Left ventricle myocardium inferior (tissue), 1 donor: ENCODE measurements at regions of chr7 and their contacts with region 1.

Region 1: DNA sequence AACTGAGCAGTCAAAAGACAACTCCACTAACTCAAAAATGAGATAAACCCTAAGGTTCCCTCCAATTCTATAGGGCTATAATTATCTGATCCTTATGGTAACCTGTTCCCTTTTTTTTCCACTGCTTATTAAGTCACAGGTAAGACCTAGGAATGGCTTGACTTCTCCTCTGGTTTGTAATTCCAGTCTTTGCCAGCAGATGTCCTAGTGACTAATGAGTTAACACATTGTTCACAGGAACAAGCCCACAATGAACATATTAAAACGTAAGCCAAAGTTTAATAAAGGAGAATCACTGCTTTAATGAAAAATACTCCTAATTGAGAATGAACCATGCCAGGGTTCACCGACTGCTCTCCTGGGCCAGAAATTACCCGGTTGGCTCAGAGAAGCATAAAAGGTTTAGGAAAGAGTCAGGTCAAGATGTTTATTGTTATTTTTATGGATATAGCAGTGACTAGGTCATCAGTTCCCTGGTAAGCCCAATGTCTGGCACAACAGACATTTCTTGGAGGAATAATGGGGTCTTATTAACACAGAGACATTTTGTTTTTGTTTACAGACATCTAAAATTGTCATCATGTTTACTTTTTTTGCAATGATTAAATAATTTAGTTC is 120.1 kb downstream of the ELAPOR2 start:
- DNase-seq: no peak
- H3K4me3 ChIP-seq: no peak overlapping the region
- H3K27ac ChIP-seq: no peak overlapping the region
- H3K4me1 ChIP-seq: peaks cover 3% of the 10 kb centered on the region
- H3K27me3 ChIP-seq: no peaks in the 10 kb centered on the region
- CTCF ChIP-seq: peak; percentile 84

Region 2: DNA sequence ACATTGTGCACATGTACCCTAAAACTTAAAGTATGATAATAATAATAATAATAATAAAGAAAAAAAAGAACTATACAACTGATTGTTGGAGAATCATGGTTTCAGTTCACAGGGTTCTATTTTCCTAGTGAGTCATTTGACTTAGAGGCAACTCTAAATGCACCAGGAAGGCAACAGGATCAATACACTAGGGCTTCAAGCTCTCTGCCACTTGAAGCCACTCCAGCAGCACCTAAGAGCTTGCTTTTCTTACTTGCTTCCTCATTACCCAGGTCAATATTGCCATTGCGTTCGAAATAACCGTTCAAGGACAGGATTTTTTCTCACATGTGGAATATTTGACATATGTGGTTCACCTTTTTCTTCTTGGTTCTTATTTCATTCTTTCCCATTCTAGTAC is 105.9 kb before region 1 on chr7:
- intact Hi-C with region 1: no loop called
- DNase-seq: no peak
- H3K4me3 ChIP-seq: no peak overlapping the region
- H3K27ac ChIP-seq: no peak overlapping the region
- H3K4me1 ChIP-seq: no peaks in the 10 kb centered on the region
- H3K27me3 ChIP-seq: no peaks in the 10 kb centered on the region
- CTCF ChIP-seq: no peak

Region 3: DNA sequence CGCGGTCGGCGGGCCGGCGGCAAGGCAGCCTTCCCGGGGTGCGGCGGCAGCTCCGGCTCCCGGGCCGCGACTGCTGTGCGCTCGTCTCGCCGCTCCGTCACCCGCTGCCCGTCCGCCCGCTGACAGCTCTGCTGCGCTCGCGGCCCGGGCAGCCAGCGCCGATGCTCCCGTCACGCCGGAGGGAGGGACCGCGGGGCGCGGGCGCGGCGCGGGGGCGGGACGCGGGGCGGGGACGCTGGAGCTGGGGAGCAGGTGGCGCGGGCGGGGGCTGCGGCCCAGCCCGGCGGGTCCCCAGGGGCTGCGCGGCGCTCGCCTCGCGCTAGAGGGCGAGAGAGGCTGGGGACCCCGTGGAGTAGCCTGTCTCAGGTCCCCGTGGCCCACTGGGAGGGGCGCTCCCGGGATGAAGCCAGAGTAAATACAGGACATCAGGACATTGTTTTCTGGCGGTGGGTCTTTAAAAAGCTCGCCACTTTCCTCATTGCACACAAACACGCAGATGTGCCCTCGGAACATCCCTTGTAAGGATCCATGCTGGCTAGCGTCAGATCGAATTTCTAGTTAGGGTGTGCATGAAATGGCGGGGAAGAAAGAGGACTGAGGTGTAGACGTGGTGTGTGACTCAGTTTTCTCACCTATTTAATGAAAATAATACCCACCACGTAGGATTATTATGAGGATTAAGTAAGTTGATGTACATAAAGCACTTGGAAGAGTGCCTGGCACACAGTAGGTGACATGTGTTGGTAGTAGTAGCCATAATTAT is 120.4 kb after region 1 on chr7 and contains the start of gene ELAPOR2:
- intact Hi-C with region 1: no loop called
- DNase-seq: peak; percentile 81
- H3K4me3 ChIP-seq: peak within 1 kb of the TSS; percentile 75
- H3K27ac ChIP-seq: peak within 1 kb of the TSS; percentile 59
- H3K4me1 ChIP-seq: peaks cover 37% of the 10 kb centered on the region
- H3K27me3 ChIP-seq: no peaks in the 10 kb centered on the region
- CTCF ChIP-seq: peak; percentile 66
- total RNA-seq, gene ELAPOR2: 3.9 TPM

Region 4: GRCh38 chr7:87129848-87130247 is 190.5 kb after region 1 on chr7:
- intact Hi-C with region 1: no loop called
- DNase-seq: no peak
- H3K4me3 ChIP-seq: no peak overlapping the region
- H3K27ac ChIP-seq: no peak overlapping the region
- H3K4me1 ChIP-seq: no peaks in the 10 kb centered on the region
- H3K27me3 ChIP-seq: no peaks in the 10 kb centered on the region
- CTCF ChIP-seq: no peak

Region 5: GRCh38 chr7:87148332-87148955 is 209.1 kb after region 1 on chr7:
- intact Hi-C with region 1: loop called (anchors 5 kb)
- DNase-seq: no peak
- H3K4me3 ChIP-seq: no peak overlapping the region
- H3K27ac ChIP-seq: no peak overlapping the region
- H3K4me1 ChIP-seq: peaks cover 29% of the 10 kb centered on the region
- H3K27me3 ChIP-seq: no peaks in the 10 kb centered on the region
- CTCF ChIP-seq: peak; percentile 75

Region 6: GRCh38 chr7:87234949-87235348 is 295.6 kb after region 1 on chr7:
- intact Hi-C with region 1: loop called (anchors 5 kb)
- DNase-seq: no peak
- H3K4me3 ChIP-seq: no peak overlapping the region
- H3K27ac ChIP-seq: no peak overlapping the region
- H3K4me1 ChIP-seq: no peaks in the 10 kb centered on the region
- H3K27me3 ChIP-seq: peaks cover 15% of the 10 kb centered on the region
- CTCF ChIP-seq: no peak

Region 7: DNA sequence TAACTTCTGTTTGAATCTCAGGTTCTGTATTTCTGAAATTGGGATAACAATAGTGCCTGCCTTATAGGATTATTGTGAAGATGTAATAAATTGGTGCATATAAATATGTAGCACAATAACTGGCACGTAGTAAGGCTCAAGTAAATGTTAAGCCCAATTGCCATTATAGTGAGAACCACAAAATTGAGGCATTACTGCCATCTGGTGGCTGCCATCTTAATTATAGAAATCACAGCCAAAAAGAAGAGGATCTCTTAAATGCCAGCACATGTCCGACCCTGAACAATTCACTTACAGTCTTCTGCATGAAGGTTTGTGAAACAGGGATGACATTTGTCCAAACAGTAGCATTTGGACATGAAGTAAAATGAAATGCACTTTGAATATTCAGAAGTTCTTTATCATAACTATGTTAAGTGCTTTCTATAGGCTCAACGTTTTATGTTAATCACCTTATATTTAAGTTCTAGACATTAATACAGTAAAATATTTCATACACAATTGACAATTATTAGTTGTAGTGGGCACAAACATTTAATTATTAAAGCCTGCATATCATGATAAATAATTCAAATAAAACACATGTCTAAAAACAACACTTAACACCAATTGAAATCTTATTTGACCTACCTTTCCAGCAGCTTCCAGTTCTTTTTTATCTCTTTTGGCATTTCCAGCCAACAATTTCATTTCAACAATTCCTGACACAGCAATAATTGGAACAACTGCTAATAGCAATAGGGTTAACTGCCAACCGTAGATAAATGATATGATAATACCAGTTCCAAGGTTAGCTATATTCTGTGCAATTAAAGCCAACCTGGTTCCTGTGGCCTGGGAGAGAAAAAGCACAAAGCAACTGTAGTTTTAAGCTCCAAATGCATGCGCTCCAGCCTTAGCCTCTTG is 477.6 kb after region 1 on chr7:
- intact Hi-C with region 1: loop called (anchors 10 kb)
- DNase-seq: no peak
- H3K4me3 ChIP-seq: no peak overlapping the region
- H3K27ac ChIP-seq: no peak overlapping the region
- H3K4me1 ChIP-seq: no peaks in the 10 kb centered on the region
- H3K27me3 ChIP-seq: no peaks in the 10 kb centered on the region
- CTCF ChIP-seq: peak; percentile 75